SK-N-SH (cell line): ENCODE measurements at regions of chr6 and their contacts with region 1.

Region 1: DNA sequence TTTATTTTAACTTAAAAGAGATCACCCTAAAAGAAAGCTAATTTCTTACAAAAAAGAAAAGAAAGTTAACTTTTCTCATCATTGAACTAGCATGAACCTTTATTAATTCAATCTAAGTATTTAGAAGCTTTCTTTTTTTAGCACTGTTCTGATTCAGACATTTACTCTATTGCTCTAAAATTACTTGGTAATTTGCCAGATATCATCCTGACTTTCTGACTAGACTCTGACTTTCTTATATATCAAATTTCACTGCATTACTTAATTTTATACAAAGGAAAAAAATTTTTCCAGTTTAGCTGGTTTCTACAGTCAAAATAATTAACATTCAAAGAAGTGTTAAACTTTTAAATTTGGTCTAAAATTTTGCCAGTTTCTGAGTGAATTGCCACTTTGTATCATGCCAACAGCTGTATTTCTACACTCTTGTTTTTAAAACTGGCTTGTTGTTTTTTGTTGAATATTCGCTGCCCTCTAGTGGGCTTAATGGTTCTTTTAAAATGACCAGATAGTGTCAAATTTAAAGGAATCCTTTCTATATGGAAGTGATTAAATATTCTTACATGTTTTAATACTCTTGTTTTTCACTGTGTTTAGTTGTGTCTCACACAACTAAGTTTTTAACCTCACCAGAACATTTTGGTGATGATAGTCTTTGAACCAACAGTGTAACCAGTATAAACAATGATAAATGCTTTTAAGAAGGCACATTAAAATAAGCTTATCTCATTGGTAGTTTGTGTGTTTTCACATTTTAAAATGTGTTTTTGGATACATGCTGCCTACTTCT is 102.0 kb downstream of the POPDC3 start:
- DNase-seq: peak; percentile 31
- H3K4me3 ChIP-seq: no peak overlapping the region
- H3K27ac ChIP-seq: peak overlapping the region; percentile 0 to 64; a peak in 3 of 4 replicates
- H3K4me1 ChIP-seq: peaks cover 0 to 6% of the 10 kb centered on the region in 2 experiments; a peak in 2 of 4 replicates
- H3K27me3 ChIP-seq: no peaks in the 10 kb centered on the region
- CTCF ChIP-seq: peak; percentile 85
- EP300 ChIP-seq: no peak
- RAD21 ChIP-seq: peak; percentile 87

Region 2: DNA sequence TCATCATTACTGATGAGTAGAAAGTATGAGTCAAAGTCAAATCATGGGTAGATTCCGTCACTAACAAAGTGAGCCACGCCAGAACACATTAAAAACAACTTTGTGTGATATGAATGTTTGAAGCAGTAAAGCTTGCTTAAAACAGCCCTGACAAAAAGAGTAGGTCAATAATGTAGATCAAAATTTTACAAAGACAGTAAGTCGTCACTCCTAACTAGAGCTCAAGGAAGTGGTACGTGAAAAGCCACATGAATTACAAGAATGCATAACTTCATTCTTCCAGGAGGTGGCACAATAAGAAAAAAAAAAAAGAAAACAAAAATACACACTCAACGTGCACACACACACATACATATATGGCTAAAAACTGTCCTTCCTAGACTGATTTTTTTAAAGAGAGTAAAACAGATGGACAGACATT is 288.0 kb before region 1 on chr6:
- CTCF ChIA-PET with region 1: interaction called, 13 read pairs
- POLR2A ChIA-PET with region 1: no interaction called
- DNase-seq: no peak
- H3K4me3 ChIP-seq: no peak overlapping the region
- H3K27ac ChIP-seq: peak overlapping the region; percentile 14 to 64; a peak in 2 of 4 replicates
- H3K4me1 ChIP-seq: peaks cover 17 to 21% of the 10 kb centered on the region in 2 experiments; a peak in 3 of 4 replicates
- H3K27me3 ChIP-seq: no peaks in the 10 kb centered on the region
- CTCF ChIP-seq: peak; percentile 49
- EP300 ChIP-seq: no peak
- RAD21 ChIP-seq: peak; percentile 59

Region 3: DNA sequence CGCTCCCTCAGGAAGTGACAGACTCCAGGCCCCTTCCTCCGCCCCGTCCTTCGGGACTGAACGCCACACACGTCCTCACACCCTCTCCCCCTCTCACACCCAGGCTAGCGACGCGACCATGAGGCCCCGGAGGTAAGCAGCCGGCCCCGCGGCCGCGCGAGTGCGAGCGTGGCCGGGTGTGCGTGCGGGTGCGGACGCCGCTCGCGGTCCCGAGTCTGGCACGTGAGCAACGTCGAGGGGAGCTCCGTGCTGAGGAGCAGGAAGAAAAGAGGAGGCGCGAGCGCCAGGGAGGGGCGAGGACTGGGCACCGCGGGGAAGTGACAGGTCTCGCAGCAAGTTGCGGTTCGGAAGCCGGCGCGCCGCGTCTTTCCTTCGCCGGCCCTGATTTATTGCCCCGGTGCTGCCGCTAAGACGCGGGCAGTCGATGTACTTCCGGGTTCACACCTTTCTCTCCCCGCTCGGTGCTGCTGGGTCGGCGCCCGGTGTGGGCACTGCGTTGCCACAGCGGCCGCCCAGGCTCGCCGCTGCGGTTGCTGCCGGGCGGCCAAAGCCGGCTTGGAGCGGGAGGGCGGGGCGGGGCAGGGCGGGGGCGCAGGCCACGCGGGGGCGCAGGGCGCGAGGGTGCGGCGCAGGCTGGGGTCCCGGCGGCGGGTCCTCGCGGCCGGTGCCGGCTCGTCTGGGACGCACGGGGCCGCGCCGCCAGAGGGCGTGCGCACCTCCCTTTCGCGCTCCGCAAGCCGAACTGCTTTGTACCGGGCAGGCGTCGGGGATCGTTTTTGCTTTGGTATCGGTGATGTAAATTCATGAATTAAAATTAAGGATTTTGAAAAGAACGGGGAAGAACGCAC is 136.7 kb before region 1 on chr6:
- CTCF ChIA-PET with region 1: interaction called, 46 read pairs
- POLR2A ChIA-PET with region 1: interaction called, 3 read pairs
- DNase-seq: peak; percentile 93
- H3K4me3 ChIP-seq: peak overlapping the region; percentile 63 to 72
- H3K27ac ChIP-seq: peak overlapping the region in 1 of 2 experiments; percentile 94; a peak in 2 of 4 replicates
- H3K4me1 ChIP-seq: peaks cover 0 to 7% of the 10 kb centered on the region in 2 experiments; a peak in 2 of 4 replicates
- H3K27me3 ChIP-seq: peaks cover 8% of the 10 kb centered on the region
- CTCF ChIP-seq: peak; percentile 73
- EP300 ChIP-seq: no peak
- RAD21 ChIP-seq: peak; percentile 70

Region 4: DNA sequence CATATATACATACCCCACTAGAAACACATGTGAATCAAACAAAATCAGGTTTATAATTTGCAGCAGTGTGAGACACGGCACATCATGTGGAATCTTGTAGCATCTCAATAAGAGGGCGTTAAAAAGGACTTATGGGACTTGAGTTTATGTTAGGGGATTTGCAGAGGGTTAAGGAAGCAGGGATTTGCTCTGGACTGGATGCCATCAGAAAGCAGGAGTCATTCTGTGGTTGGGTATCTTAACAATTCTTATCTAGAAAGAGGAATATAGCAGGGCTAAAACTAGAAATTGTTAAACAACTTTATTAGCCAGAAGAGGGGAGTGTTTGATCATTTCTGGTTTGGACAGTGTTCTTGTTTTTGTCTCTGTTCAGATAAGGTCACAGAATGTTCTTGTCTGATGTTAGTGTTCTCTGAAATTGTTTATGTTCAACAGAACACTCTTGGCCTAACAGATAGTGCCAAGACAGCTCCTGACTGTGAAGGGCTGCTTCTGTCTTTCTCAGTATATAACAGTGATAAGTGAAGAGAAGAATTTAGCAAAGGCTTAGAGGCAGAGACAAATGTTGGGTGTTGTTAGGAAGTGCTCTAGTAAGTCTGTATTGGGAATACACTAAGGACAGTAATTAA is 81.7 kb before region 1 on chr6:
- CTCF ChIA-PET with region 1: interaction called, 54 read pairs
- POLR2A ChIA-PET with region 1: interaction called, 3 read pairs
- DNase-seq: peak; percentile 58
- H3K4me3 ChIP-seq: no peak overlapping the region
- H3K27ac ChIP-seq: peak overlapping the region in 1 of 2 experiments; percentile 70; a peak in 2 of 4 replicates
- H3K4me1 ChIP-seq: peaks cover 3% of the 10 kb centered on the region in 2 experiments; a peak in 3 of 4 replicates
- H3K27me3 ChIP-seq: no peaks in the 10 kb centered on the region
- CTCF ChIP-seq: peak; percentile 58
- EP300 ChIP-seq: 0 out of 4 replicates have a peak, but pooled peaks of 1 of the 2 experiments have one; percentile 24
- RAD21 ChIP-seq: peak; percentile 82

Region 5: GRCh38 chr6:105041880-105042279 is 35.9 kb before region 1 on chr6:
- CTCF ChIA-PET with region 1: interaction called, 10 read pairs
- POLR2A ChIA-PET with region 1: no interaction called
- DNase-seq: no peak
- H3K4me3 ChIP-seq: no peak overlapping the region
- H3K27ac ChIP-seq: peak overlapping the region; percentile 14 to 72; a peak in 2 of 4 replicates
- H3K4me1 ChIP-seq: peaks cover 3 to 5% of the 10 kb centered on the region in 2 experiments; a peak in 3 of 4 replicates
- H3K27me3 ChIP-seq: no peaks in the 10 kb centered on the region
- CTCF ChIP-seq: no peak
- EP300 ChIP-seq: no peak
- RAD21 ChIP-seq: no peak